PC-9 (cell line): ENCODE measurements at regions of chr12 and their contacts with region 1.

Region 1: GRCh38 chr12:77152623-77153193 is 87.3 kb upstream of the E2F7 start:
- DNase-seq: no peak
- H3K4me3 ChIP-seq: no peak overlapping the region
- H3K27ac ChIP-seq: no peak overlapping the region
- H3K4me1 ChIP-seq: peaks cover 7% of the 10 kb centered on the region; the same call in 1 of the 2 replicates
- H3K27me3 ChIP-seq: no peaks in the 10 kb centered on the region
- CTCF ChIP-seq: peak; percentile 63

Region 2: GRCh38 chr12:77065361-77066204 is 87.1 kb before region 1 on chr12 and contains the start of gene E2F7:
- CTCF ChIA-PET with region 1: no interaction called
- POLR2A ChIA-PET with region 1: no interaction called
- intact Hi-C with region 1: loop called (anchors 5 kb)
- DNase-seq: peak; percentile 80 to 95
- H3K4me3 ChIP-seq: peak within 1 kb of the TSS; percentile 93
- H3K27ac ChIP-seq: peak within 1 kb of the TSS; percentile 27; the same call in 1 of the 2 replicates
- H3K4me1 ChIP-seq: peaks cover 19% of the 10 kb centered on the region
- H3K27me3 ChIP-seq: no peaks in the 10 kb centered on the region
- CTCF ChIP-seq: no peak
- total RNA-seq, gene E2F7: 9.8 and 14.6 TPM in 2 replicates

Region 3: GRCh38 chr12:77324763-77325468 is 172.2 kb after region 1 on chr12:
- CTCF ChIA-PET with region 1: interaction called, 7 read pairs
- POLR2A ChIA-PET with region 1: no interaction called
- intact Hi-C with region 1: loop called (anchors 10 kb)
- DNase-seq: peak in 1 of 2 experiments; percentile 68
- H3K4me3 ChIP-seq: peak overlapping the region; percentile 76
- H3K27ac ChIP-seq: no peak overlapping the region
- H3K4me1 ChIP-seq: no peaks in the 10 kb centered on the region
- H3K27me3 ChIP-seq: no peaks in the 10 kb centered on the region
- CTCF ChIP-seq: 0 out of 2 replicates have a peak, but pooled peaks have one; percentile 45

Region 4: DNA sequence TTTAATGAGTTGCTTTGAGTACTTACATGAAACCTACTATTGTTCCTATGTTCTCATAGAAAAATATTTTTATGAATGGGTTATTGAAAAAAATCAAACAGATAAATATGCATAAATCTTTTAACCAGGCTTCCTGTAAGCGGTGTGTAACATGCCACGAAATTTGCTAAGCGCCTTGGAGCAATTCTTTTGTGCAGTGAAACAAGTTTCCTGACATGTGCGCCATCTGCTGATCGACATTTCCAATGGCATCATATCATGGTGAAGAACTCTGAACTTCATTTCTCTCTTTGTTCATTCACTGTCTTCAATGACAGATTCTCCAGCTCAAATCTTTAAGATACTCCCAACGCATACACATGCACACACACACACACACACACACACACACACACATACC is 532.4 kb after region 1 on chr12:
- CTCF ChIA-PET with region 1: interaction called, 3 read pairs
- POLR2A ChIA-PET with region 1: no interaction called
- intact Hi-C with region 1: loop called (anchors 2 kb)
- DNase-seq: peak in 1 of 2 experiments; percentile 46
- H3K4me3 ChIP-seq: no peak overlapping the region
- H3K27ac ChIP-seq: no peak overlapping the region
- H3K4me1 ChIP-seq: no peaks in the 10 kb centered on the region
- H3K27me3 ChIP-seq: no peaks in the 10 kb centered on the region
- CTCF ChIP-seq: peak; percentile 68